ENCODE measurements at regions of chr1 and their contacts with region 1.

Region 1: GRCh38 chr1:15825800-15826199 is 18.4 kb upstream of the UQCRHL start:
- DNase-seq: no peak
- ATAC-seq: peak in 4 of 8 donors; percentile 31 to 55 (median 43)
- H3K4me3 ChIP-seq: no peak overlapping the region
- H3K27ac ChIP-seq: peak overlapping the region in 2 of 10 donors; percentile 7 to 41
- H3K4me1 ChIP-seq: peaks cover 0 to 34% (median 6%) of the 10 kb centered on the region in 9 donors
- H3K27me3 ChIP-seq: no peaks in the 10 kb centered on the region
- CTCF ChIP-seq: no peak

Region 2: DNA sequence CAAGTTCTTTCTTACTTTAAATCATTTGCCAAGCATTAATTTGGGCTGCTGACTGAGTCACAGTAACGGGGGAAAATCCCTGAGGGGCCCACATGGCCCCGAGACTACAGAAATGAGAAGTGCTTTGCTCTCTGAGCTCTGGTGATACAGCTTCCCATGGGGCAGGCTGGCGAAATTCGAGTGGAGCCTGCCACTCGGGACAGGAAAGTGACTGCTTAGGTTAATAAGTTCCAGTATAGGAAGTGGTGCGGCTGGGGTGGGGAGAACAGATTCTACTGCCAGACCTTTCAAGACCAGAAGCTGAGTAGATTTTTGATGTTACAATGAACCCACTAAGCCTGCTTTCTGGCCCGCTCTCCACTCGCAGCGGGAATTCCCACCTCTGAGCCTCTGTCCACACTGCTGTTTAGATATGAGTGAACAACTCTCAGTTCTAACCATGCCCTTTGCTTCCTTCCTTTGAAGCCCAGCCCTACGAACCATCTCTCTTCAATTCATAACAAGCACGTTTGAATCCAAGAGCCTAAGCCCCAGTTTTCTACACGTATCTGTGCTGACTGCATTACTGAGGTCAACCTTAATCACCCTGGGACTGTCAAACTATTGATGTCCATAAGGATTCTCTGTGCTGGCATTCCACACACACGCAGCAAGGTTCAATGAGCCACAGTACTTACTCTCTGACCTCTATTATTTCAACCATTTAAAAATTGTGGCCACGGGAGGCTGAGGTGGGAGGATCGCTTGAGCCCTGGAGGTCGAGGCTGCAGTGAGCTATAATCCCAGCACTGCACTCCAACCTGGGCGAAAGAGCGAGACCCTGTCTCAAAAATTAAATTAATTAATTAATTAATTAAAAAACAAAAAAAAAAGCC is 140.5 kb after region 1 on chr1:
- intact Hi-C with region 1: loop called in 1 of 10 experiments (anchors 10 kb)
- DNase-seq: no peak
- ATAC-seq: peak; percentile 21 to 64 (median 46)
- H3K4me3 ChIP-seq: no peak overlapping the region
- H3K27ac ChIP-seq: peak overlapping the region in 8 of 10 donors; percentile 32 to 83 (median 48)
- H3K4me1 ChIP-seq: peaks cover 11 to 51% (median 26%) of the 10 kb centered on the region in 9 donors
- H3K27me3 ChIP-seq: no peaks in the 10 kb centered on the region
- CTCF ChIP-seq: no peak

Region 3: DNA sequence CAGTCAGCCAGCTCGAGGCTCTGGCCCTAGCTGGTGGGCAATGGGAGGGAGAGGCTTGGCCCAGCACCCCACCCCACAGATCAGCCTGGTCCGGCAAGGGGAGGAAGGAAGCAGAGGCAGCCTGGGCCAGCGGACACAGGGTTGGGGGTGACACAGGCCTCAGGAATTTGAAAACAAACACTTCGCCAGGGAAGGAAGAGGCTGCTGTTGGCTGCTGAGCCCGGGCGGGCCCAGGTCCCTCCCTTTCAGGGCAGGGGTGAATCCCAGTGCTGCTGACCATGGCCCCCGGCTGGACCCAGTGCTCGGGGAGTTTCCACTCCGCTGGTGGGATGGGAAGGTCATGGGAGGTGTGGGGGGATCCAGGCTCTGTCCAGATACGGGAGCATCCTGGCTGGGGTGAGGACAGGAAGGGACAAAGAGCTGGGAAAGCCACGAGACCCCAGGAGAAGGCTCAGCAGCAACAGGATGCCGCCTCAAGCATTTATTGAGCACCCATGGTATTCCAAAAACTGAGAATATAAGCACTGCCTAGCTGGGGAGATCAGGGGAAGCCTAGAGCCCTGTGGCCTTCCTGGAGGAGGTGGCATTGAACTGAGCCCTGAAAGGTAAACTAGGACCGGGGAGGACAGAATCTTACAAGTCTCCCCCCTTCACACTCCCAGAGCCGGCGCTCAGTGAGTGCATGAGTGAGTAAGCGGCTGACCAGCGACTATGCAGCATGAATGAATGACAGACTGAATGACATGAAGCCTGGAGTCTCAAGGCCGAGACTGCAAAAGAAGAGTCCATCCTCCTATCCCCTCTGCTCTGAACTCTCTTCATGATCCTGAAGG is 356.3 kb after region 1 on chr1:
- intact Hi-C with region 1: no loop called
- DNase-seq: peak; percentile 85 to 88
- ATAC-seq: peak; percentile 91 to 97 (median 96)
- H3K4me3 ChIP-seq: peak overlapping the region in 1 of 10 donors; percentile 5
- H3K27ac ChIP-seq: peak overlapping the region; percentile 75 to 97 (median 92)
- H3K4me1 ChIP-seq: peaks cover 12 to 36% (median 25%) of the 10 kb centered on the region in 9 donors
- H3K27me3 ChIP-seq: no peaks in the 10 kb centered on the region
- CTCF ChIP-seq: no peak

Measured in heart right ventricle (tissue), 16 donors.